GM10248 (cell line): ENCODE measurements at regions of chr2 and their contacts with region 1.

Region 1: DNA sequence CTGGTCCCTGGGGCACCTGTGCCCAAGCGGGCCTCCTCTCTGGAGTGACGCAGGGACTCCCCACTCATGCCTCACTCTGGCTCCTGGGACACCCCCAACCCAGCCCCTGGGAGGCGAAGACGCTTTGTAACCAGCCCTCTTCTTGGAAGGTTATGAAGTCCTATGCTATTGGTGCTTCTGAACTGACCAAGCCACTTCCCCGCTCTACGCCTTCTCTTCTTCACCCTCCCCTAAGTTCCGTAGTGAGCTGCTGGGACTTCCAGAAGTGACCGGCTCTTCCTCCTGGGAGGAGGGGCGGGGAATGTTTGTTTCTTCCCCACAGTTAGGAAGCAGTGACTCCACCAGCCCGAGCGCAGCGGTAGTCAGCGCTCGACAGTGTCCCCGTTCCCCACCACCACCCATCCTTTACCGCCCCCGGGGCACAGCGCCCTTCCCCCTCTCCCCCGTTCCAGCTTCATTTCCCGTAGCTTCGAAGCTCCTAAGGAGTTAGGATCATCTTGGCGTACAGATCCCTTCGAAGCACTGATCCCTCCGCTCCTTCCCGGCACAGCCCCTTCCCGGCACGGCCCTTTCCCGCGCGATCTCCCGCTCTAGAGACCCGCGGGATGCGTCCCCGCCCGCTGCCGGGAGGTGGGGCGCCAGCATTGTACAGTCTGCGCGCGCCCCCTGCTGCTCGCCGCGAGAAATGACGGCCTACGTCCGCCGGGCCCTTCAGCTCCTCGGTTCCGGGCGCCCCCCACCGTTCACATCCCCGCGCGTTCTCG is 25.3 kb upstream of the NOTO start:
- DNase-seq: peak; percentile 94
- CTCF ChIP-seq: peak; percentile 98

Region 2: DNA sequence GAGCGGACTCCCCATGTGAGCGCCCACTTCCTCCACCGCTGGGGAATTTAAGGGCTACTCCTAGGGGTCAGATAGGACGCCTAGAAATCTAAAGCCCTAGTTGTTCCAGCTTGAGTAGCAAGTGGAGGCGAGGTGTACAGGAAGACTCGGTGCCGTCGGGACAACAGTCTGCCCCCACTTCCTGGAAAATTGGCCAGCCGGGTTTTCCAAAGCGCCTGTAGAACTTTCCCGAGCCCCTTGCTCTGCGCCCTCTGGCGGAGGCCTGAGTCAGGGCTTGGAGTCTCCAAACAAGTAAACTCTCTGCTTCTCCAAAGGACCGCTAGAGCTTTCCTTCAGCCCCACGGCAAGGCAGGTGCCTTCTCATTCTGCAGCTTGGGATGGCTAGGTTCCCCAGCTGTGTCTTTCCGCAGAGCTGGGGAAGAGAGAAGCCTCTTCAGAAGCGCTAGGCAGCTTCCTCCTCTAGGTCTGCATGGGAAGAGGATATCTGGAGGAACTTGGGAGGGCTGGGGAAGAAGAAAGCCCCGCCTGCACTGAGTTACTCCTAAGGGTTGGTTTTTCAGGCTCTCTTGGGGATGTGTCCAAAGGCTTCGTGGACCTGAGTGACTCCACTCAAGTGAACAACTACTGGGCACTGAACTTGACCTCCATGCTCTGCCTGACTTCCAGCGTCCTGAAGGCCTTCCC is 289.2 kb before region 1 on chr2:
- CTCF ChIA-PET with region 1: interaction called, 86 read pairs
- POLR2A ChIA-PET with region 1: no interaction called
- DNase-seq: peak; percentile 68
- CTCF ChIP-seq: peak; percentile 86

Region 3: GRCh38 chr2:72993147-72993932 is 183.7 kb before region 1 on chr2:
- CTCF ChIA-PET with region 1: interaction called, 136 read pairs
- POLR2A ChIA-PET with region 1: no interaction called
- DNase-seq: peak; percentile 78
- CTCF ChIP-seq: peak; percentile 70

Region 4: DNA sequence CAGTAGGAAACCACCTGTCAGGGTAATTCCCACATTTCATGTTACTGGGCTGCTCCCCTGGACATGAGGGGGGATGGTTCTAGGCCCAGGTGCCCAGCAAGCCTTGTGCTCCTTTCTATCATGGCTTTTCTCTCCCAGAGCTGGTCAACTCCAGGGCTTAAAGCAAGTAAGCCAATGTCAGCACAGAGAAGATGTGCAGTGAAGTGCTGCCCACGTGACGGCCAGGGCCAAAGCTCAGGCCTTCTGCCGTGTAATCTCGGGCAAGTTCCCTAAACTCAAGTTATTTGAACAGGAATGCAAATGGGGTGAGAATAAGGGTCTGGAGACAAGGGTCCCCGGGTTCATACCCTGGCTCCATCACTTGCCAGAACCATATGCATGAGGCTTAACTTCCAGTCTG is 122.1 kb before region 1 on chr2:
- CTCF ChIA-PET with region 1: no interaction called
- POLR2A ChIA-PET with region 1: no interaction called
- DNase-seq: no peak
- CTCF ChIP-seq: no peak

Region 5: GRCh38 chr2:73080711-73081131 is 96.3 kb before region 1 on chr2:
- CTCF ChIA-PET with region 1: interaction called, 70 read pairs
- POLR2A ChIA-PET with region 1: no interaction called
- DNase-seq: no peak
- CTCF ChIP-seq: no peak

Region 6: DNA sequence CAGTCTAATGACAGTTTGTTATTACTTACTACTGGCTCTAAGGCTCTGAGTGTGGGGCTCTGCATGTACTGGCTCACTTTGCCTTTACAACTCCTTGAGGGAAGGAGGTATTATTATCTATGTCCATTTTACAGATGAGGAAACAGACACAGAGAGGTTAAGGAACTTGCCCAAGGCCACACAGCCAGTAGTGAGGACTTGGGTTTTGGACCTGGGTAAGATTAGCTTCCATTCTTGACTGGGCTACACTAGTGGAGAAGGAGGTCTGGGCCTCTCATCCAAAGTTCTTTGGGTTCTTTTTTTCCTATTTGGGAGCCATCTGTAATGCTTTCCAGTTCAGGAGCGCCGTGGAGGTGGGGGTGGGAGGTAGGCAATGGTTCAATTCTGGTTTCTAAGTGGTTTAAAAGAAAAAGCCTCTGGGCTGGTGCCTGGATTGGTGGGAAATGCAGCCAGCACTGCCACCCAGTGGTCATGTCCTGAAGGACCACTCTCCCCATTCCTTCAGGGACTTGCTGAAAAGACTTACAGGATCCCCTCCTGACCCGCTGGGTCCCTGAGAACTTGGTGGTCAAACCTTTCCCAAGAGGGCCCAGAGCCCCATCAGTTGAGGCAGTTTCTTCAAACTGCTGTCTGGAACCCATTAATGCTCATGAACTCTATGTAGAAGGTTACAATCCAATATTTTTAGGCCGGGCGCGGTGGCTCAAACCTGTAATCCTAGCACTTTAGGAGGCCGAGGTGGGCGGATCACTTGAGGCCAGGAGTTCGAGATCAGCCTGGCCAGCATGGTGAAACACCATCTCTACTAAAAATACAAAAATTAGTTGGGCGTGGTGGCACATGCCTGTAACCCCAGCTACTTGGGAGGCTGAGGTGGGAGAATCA is 13.3 kb before region 1 on chr2:
- CTCF ChIA-PET with region 1: interaction called, 14 read pairs
- POLR2A ChIA-PET with region 1: no interaction called
- DNase-seq: peak; percentile 81
- CTCF ChIP-seq: peak; percentile 88

Region 7: DNA sequence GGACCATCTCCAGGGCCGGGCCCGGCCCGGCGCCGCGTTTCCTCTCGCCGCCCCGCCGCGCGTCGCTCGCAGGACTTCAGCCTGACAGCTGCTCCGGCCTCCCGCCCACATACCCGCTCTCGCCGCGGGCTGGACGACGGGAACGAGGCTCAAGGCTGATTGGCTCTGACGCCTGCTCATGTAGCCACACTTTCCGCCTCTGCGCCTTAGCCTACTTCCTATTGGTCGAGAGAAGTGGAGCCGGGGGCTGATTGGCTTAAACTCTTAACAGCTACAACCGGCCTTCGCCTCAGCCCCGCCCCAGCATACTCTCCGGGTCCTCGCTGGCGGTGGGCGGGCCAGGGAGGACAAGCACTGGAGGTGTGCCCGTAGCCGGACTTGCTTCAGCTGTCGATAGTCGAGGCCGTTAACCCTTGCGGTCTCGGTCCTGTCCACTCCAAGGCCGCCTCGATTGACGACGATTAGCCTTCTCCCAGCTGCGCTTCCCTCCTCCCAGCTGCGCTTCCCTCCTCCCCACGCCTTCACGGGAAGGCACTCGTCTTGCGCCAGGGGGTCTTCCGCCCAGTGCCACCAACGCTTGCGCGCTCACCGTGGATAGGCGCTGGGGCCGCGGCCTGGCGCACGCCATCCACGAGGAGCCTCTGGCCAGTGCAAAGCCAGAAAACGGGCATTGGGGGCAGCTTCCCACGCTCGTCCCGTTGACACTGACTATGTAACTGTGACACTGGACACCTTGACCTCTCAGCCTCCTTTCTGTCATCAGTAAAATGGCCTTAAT is 56.3 kb after region 1 on chr2 and contains the start of gene PRADC1:
- CTCF ChIA-PET with region 1: interaction called, 11 read pairs
- POLR2A ChIA-PET with region 1: interaction called, 3 read pairs
- DNase-seq: peak; percentile 98
- CTCF ChIP-seq: no peak